Heart right ventricle (tissue), 16 donors: ENCODE measurements at regions of chr9 and their contacts with region 1.

Region 1: DNA sequence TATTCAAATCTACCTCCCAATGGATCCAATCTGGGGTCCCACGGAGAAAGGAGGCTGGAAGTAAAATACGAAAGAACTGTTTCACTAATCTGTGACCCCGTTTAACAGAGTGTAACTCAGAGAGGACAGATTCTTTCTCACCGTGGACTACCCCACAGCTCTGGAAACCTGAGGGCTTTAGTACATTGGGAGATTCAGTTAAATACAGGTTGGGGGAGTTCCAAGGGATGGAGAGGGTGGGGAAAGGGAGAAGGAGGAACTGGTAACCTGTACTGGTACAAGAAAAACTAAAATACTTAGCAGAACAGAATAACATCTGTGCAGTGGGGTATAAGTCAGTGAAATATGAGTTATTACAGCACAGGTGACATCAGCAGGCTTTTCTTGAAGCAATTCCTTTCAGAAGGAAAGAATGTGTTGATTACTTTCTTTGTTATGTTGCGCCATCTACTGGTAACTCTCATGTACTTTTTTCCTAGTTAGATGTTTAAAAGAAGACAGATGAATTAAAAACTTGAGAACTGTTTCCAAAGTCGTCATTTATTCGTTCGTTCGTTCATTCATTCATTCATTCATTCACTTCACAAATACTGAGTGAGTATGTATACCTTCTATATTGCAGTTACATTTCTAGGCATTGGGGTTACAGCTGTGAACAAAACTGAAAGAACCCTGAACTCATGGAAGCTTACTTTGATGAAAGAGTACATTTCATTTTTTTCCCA is 30.0 kb upstream of the STOM start:
- DNase-seq: peak in 1 of 2 donors; percentile 19
- ATAC-seq: peak in 5 of 8 donors; percentile 46 to 68 (median 64)
- H3K4me3 ChIP-seq: no peak overlapping the region
- H3K27ac ChIP-seq: no peak overlapping the region
- H3K4me1 ChIP-seq: peaks cover 0 to 6% (median 0%) of the 10 kb centered on the region in 9 donors
- H3K27me3 ChIP-seq: no peaks in the 10 kb centered on the region
- CTCF ChIP-seq: peak; percentile 60 to 80 (median 72)

Region 2: DNA sequence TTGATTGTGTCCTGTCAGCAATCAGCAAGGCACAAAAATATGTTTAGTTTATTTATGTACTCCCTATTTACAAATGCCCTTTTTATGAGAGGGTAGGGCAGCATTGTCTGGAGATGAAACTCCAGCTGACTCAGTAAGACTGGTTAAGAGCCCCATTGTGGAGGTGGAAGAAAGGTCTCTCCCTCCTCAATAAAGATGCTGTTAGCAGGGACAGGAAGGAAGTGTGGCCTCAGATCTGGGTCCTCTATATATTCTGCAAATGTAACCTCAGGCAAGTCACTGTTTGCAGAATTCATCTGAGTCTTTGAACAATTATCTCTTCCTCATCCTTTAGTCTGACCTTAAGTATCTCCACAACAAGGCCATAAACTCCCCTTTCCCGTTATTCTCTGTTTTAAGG is 425.1 kb before region 1 on chr9:
- intact Hi-C with region 1: loop called in 4 of 10 experiments (anchors 5 to 10 kb)
- DNase-seq: no peak
- ATAC-seq: no peak
- H3K4me3 ChIP-seq: no peak overlapping the region
- H3K27ac ChIP-seq: no peak overlapping the region
- H3K4me1 ChIP-seq: peaks cover 0 to 10% (median 0%) of the 10 kb centered on the region in 9 donors
- H3K27me3 ChIP-seq: no peaks in the 10 kb centered on the region
- CTCF ChIP-seq: no peak

Region 3: DNA sequence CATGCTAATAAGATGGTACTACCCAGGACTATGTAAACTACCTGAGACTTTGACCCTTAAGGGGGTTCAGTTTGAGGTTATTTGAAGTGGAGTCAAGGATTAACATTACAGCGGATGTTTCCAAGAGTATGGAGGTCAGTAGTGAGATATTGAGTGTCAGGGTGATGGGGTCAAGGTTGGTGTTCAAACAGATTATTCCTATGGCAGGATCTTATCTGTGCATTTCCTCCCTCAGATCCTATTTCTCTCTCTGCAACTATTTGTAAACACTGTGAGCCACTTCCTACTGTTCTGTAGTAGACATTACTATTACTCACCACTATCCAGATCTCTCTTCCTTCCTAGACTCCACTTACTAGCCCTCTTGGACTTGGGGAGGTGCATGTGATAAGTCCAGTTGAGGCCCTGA is 24.0 kb after region 1 on chr9:
- intact Hi-C with region 1: no loop called
- DNase-seq: no peak
- ATAC-seq: no peak
- H3K4me3 ChIP-seq: no peak overlapping the region
- H3K27ac ChIP-seq: no peak overlapping the region
- H3K4me1 ChIP-seq: no peaks in the 10 kb centered on the region
- H3K27me3 ChIP-seq: no peaks in the 10 kb centered on the region
- CTCF ChIP-seq: no peak

Region 4: DNA sequence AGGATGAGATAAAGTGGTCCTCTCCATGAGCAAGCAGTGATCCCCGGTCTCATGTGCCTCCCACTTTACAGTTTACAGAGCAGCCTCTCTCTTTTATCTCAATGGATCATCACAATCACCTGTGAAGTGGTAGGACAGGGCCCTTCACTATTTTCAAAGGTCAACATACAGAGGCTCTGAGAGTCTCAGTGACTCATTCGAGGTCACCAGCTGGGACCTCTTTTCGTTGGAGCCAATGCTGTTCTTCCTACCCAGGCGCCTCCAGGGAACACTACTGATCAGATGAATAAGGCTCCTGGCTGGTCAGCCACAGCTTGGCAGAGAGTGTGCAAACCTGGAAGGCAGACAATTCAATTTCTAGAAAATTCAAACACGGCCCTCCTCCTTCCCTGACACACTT is 83.0 kb after region 1 on chr9:
- intact Hi-C with region 1: no loop called
- DNase-seq: no peak
- ATAC-seq: peak in 2 of 8 donors; percentile 48 to 54
- H3K4me3 ChIP-seq: no peak overlapping the region
- H3K27ac ChIP-seq: peak overlapping the region in 3 of 10 donors; percentile 13 to 50 (median 17)
- H3K4me1 ChIP-seq: peaks cover 32 to 81% (median 67%) of the 10 kb centered on the region in 9 donors
- H3K27me3 ChIP-seq: no peaks in the 10 kb centered on the region
- CTCF ChIP-seq: no peak